AG04450 (cell line): ENCODE measurements at regions of chr14 and their contacts with region 1.

Region 1: DNA sequence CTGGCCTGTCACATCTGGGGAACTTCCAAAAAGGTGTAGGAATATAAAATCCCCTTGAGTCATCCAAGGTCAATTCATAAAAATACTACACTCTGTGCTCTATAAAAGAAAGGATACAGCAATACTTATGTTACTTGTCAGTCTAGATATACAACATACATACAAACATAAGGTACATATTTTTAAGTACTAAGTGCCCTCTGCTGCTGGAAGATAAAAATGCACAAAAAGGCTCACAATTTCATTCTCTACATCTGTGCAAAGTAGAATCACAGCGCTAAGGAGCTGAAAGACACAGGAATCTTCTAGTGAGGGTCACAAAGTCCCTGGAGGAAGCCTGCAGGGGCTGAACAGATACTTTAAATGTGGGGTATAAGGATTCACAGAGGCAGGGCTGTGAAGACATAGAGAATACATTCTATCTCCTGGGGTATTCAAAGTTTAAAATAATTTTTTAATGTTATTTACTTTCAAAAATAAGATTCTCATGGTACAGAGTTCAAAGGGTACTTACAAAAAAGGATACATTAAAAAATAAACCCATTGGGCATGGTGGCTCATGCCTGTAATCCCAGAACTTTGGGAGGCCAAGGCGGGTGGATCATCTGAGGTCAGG is 10.2 kb upstream of the GOLGA5 start:
- DNase-seq: peak; percentile 30
- H3K4me3 ChIP-seq: no peak overlapping the region
- H3K27ac ChIP-seq: no peak overlapping the region
- H3K27me3 ChIP-seq: no peaks in the 10 kb centered on the region
- CTCF ChIP-seq: peak; percentile 62

Region 2: GRCh38 chr14:92680781-92681650 is 102.9 kb before region 1 on chr14:
- CTCF ChIA-PET with region 1: interaction called, 164 read pairs
- POLR2A ChIA-PET with region 1: no interaction called
- DNase-seq: peak; percentile 45
- H3K4me3 ChIP-seq: no peak overlapping the region
- H3K27ac ChIP-seq: peak overlapping the region; percentile 21
- H3K27me3 ChIP-seq: no peaks in the 10 kb centered on the region
- CTCF ChIP-seq: peak; percentile 98

Region 3: GRCh38 chr14:92686900-92687444 is 97.0 kb before region 1 on chr14:
- CTCF ChIA-PET with region 1: interaction called, 164 read pairs
- POLR2A ChIA-PET with region 1: interaction called, 3 read pairs
- DNase-seq: peak; percentile 13
- H3K4me3 ChIP-seq: no peak overlapping the region
- H3K27ac ChIP-seq: no peak overlapping the region
- H3K27me3 ChIP-seq: no peaks in the 10 kb centered on the region
- CTCF ChIP-seq: peak; percentile 95

Region 4: GRCh38 chr14:92712654-92713051 is 71.3 kb before region 1 on chr14:
- CTCF ChIA-PET with region 1: interaction called, 46 read pairs
- POLR2A ChIA-PET with region 1: interaction called, 6 read pairs
- DNase-seq: no peak
- H3K4me3 ChIP-seq: no peak overlapping the region
- H3K27ac ChIP-seq: no peak overlapping the region
- H3K27me3 ChIP-seq: no peaks in the 10 kb centered on the region
- CTCF ChIP-seq: no peak

Region 5: GRCh38 chr14:92768795-92769194 is 15.1 kb before region 1 on chr14:
- CTCF ChIA-PET with region 1: interaction called, 11 read pairs
- POLR2A ChIA-PET with region 1: no interaction called
- DNase-seq: no peak
- H3K4me3 ChIP-seq: no peak overlapping the region
- H3K27ac ChIP-seq: no peak overlapping the region
- H3K27me3 ChIP-seq: peaks cover 3% of the 10 kb centered on the region
- CTCF ChIP-seq: no peak